Activated T-helper 1 cell treated with anti-CD3 and anti-CD28 coated beads, Interleukin-12 subunit alpha, Interleukin-12 subunit beta, Interleukin-2, Interleukin-4 antibody, amounts not matched to agents 30 ng/mL and 10 ng/mL and 1 ng/mL, durations not matched to agents 14 hours and 24 hours and 36 hours (primary cell): ENCODE measurements at regions of chr2 and their contacts with region 1.

Region 1: GRCh38 chr2:223957092-223957851 is at the start of gene MRPL44:
- DNase-seq: peak; percentile 96
- H3K4me3 Mint-ChIP-seq: peak within 1 kb of the TSS; percentile 96
- H3K27ac Mint-ChIP-seq: peak within 1 kb of the TSS; percentile 91
- H3K4me1 Mint-ChIP-seq: peaks cover 79% of the 10 kb centered on the region
- H3K27me3 Mint-ChIP-seq: no peaks in the 10 kb centered on the region
- total RNA-seq, gene MRPL44: 32.7 and 35.0 TPM in 2 replicates

Region 2: DNA sequence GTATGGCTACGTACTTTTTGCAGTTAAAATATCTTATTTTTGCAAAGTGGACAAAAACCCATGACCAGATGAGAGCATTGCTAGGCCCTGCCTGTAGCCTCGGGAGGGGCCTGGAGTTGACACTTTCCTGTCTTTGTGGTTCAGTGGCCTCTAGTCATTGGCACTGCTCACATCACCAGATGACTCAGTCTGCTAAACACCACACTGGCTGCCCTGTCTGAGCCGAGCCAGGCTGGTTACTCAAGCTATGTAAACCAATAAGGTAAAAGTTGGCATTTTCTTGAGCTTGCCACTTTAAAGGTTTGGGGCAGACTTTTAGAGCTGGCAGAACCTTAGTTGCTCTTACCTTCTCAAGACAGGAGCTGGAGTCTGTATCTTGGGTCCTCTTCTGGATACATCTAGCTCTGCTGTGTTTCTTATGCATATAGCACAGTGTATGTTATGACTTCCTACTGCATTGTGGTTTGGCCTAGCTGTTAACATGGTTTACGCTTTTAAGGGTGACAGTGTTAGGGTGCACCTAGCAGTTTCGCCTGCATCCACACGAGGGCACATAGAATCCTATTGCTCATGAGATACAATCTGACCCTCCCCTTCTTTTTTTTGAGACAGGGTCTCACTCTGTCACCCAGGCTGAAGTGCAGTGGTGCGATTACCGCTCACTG is 196.3 kb before region 1 on chr2:
- intact Hi-C with region 1: loop called (anchors 1 kb)
- DNase-seq: peak; percentile 55
- H3K4me3 Mint-ChIP-seq: no peak overlapping the region
- H3K27ac Mint-ChIP-seq: peak overlapping the region; percentile 40
- H3K4me1 Mint-ChIP-seq: peaks cover 24% of the 10 kb centered on the region
- H3K27me3 Mint-ChIP-seq: no peaks in the 10 kb centered on the region

Region 3: GRCh38 chr2:223837287-223838061 is 119.8 kb before region 1 on chr2 and contains the start of gene AP1S3:
- intact Hi-C with region 1: loop called (anchors 1 kb)
- DNase-seq: peak; percentile 63
- H3K4me3 Mint-ChIP-seq: peak within 1 kb of the TSS; percentile 92
- H3K27ac Mint-ChIP-seq: peak within 1 kb of the TSS; percentile 76
- H3K4me1 Mint-ChIP-seq: peaks cover 12% of the 10 kb centered on the region
- H3K27me3 Mint-ChIP-seq: peaks cover 7% of the 10 kb centered on the region
- total RNA-seq, gene AP1S3: 11.9 and 14.4 TPM in 2 replicates

Region 4: DNA sequence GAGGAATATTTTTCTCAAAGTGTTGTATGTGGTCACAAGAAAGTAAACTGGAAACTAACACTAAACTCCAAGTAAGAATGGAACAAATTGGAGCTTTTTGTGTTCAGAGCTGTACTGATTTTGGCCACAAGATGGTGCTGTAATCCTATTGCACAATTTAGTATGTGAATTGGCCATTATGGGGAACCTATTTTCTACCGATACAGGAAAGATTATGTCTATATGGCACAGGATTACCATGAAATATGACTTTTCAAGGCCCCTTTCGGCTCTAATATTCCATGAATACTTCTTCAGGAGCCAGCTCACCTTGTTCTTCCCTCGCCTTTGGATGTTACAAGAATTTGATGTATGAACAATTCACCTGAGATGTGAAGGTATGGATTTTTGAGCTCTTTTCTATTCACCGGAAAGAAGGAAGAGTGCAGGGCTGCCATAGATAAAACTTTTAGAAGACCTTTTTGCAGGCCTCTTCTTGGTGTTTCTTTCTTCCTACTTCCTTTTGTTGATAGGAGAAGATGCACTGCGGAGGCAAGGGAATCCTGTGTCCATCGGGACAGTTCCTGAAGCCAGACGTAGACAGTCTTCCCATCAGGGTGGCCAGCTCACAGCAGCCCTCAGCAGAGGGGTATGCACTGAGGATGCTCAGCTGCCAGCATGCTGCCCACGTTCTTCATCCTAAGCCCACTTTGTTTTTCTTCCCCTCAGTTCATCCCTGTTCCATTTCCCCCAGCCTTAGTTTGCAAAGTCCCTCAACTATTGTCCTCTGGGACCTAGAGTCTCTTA is 13.3 kb after region 1 on chr2:
- intact Hi-C with region 1: loop called (anchors 1 kb)
- DNase-seq: peak; percentile 41
- H3K4me3 Mint-ChIP-seq: no peak overlapping the region
- H3K27ac Mint-ChIP-seq: no peak overlapping the region
- H3K4me1 Mint-ChIP-seq: peaks cover 8% of the 10 kb centered on the region
- H3K27me3 Mint-ChIP-seq: no peaks in the 10 kb centered on the region

Region 5: DNA sequence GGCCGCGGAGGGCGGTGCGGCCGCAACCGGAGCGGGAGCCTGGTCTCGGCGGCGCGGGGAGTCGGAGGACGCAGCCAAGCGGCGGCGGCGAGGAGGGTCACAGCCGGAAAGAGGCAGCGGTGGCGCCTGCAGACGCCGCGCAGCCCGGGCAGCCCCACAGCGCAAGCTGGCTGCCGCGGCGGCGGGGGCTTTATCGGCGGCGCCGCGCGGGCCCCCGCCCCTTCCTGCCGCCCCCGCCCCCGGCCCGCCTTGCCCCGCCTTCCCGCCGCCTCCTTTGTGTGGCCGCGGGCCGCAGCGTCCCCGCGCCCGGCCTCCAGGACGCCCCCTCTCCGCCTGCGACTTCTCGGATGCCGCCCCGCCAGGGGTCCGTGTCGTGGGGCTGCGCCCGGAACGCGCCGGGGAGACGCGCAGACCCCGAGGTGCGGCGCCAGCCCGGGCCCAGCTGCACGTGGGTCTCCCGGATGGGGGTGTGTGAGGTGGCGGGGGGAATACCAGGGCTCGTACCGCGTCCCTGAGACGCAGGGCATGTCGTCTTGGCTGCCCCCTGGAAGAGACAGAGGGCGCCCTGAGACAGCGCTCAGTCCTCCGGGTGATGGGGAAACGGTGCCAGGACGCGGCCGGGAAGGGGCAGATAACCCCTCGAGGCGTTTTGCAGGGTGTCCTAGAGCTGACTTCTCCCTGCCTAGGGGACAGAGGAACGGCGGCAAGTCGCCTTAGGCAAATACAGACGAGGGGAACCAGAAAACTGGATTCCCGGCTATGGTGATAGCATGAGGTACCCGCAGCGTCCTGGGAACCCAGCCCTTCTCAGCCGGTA is 82.1 kb after region 1 on chr2 and contains the start of gene SERPINE2:
- intact Hi-C with region 1: loop called (anchors 1 kb)
- DNase-seq: peak; percentile 46
- H3K4me3 Mint-ChIP-seq: peak within 1 kb of the TSS; percentile 97
- H3K27ac Mint-ChIP-seq: peak within 1 kb of the TSS; percentile 82
- H3K4me1 Mint-ChIP-seq: peaks cover 25% of the 10 kb centered on the region
- H3K27me3 Mint-ChIP-seq: peaks cover 38% of the 10 kb centered on the region
- total RNA-seq, gene SERPINE2: 28.8 and 29.7 TPM in 2 replicates